ENCODE measurements at regions of chrX and their contacts with region 1.

Region 1: GRCh38 chrX:34028488-34028887 is 103.6 kb downstream of the FAM47A start:
- DNase-seq: no peak
- ATAC-seq: no peak
- H3K4me3 Mint-ChIP-seq: no peak overlapping the region
- H3K27ac Mint-ChIP-seq: no peak overlapping the region
- H3K4me1 Mint-ChIP-seq: no peaks in the 10 kb centered on the region
- H3K27me3 Mint-ChIP-seq: no peaks in the 10 kb centered on the region
- CTCF ChIP-seq: no peak

Region 2: GRCh38 chrX:32662516-32662915 is 1366.0 kb before region 1 on chrX:
- CTCF ChIA-PET with region 1: no interaction called
- POLR2A ChIA-PET with region 1: no interaction called
- intact Hi-C with region 1: no loop called
- DNase-seq: no peak
- ATAC-seq: no peak
- H3K4me3 Mint-ChIP-seq: no peak overlapping the region
- H3K27ac Mint-ChIP-seq: no peak overlapping the region
- H3K4me1 Mint-ChIP-seq: no peaks in the 10 kb centered on the region
- H3K27me3 Mint-ChIP-seq: no peaks in the 10 kb centered on the region
- CTCF ChIP-seq: no peak

Region 3: GRCh38 chrX:32985544-32985943 is 1042.9 kb before region 1 on chrX:
- CTCF ChIA-PET with region 1: no interaction called
- POLR2A ChIA-PET with region 1: no interaction called
- intact Hi-C with region 1: no loop called
- DNase-seq: no peak
- ATAC-seq: no peak
- H3K4me3 Mint-ChIP-seq: no peak overlapping the region
- H3K27ac Mint-ChIP-seq: no peak overlapping the region
- H3K4me1 Mint-ChIP-seq: no peaks in the 10 kb centered on the region
- H3K27me3 Mint-ChIP-seq: no peaks in the 10 kb centered on the region
- CTCF ChIP-seq: no peak

Region 4: GRCh38 chrX:33385546-33385945 is 642.9 kb before region 1 on chrX:
- CTCF ChIA-PET with region 1: no interaction called
- POLR2A ChIA-PET with region 1: no interaction called
- intact Hi-C with region 1: loop called (anchors 10 kb)
- DNase-seq: no peak
- ATAC-seq: no peak
- H3K4me3 Mint-ChIP-seq: no peak overlapping the region
- H3K27ac Mint-ChIP-seq: no peak overlapping the region
- H3K4me1 Mint-ChIP-seq: no peaks in the 10 kb centered on the region
- H3K27me3 Mint-ChIP-seq: no peaks in the 10 kb centered on the region
- CTCF ChIP-seq: no peak

Region 5: GRCh38 chrX:33989936-33990335 is 38.6 kb before region 1 on chrX:
- CTCF ChIA-PET with region 1: no interaction called
- POLR2A ChIA-PET with region 1: no interaction called
- intact Hi-C with region 1: no loop called
- DNase-seq: no peak
- ATAC-seq: no peak
- H3K4me3 Mint-ChIP-seq: no peak overlapping the region
- H3K27ac Mint-ChIP-seq: no peak overlapping the region
- H3K4me1 Mint-ChIP-seq: no peaks in the 10 kb centered on the region
- H3K27me3 Mint-ChIP-seq: no peaks in the 10 kb centered on the region
- CTCF ChIP-seq: no peak